Activated CD4-positive, alpha-beta T cell treated with anti-CD3 and anti-CD28 coated beads, Interleukin-2, amount 10 ng/mL, durations not matched to agents 24 days and 14 days (primary cell): ENCODE measurements at regions of chr3 and their contacts with region 1.

Region 1: DNA sequence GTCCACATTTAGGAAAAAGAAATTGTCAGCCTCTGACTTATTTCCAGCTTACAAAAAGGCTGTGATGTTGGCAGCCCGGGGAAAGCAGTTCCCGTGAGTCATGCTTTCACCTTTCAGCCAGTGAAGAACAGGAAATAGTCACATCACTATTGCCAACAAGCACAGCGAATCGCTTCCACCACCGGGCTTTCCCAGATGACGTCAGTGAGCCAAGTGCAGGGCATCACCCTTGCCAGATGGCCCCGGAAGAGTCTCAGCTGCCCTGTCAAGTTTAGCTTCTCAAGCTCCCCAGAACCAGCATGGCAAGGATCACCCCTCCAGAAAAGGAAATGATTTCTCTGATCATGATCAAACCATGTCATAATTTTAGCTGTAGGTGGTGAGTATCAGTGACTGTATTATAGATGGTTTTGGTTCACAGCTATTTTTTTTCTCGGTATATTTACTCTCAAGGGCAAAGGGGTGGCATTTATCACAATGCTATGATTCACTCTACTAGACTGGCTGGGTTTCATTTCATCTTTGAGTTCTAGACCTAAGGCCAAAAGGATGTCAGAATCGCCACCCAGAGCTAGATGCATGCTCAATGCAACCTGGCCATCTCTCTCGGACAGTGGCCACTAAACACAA is 32.9 kb downstream of the B3GNT5 start:
- DNase-seq: peak; percentile 96
- H3K4me3 Mint-ChIP-seq: peak overlapping the region; percentile 82
- H3K27ac Mint-ChIP-seq: peak overlapping the region; percentile 97
- H3K4me1 Mint-ChIP-seq: peaks cover 32% of the 10 kb centered on the region
- H3K27me3 Mint-ChIP-seq: no peaks in the 10 kb centered on the region

Region 2: GRCh38 chr3:183224180-183224970 is 61.6 kb before region 1 on chr3:
- intact Hi-C with region 1: loop called (anchors 1 kb)
- DNase-seq: peak; percentile 85
- H3K4me3 Mint-ChIP-seq: peak overlapping the region; percentile 74
- H3K27ac Mint-ChIP-seq: peak overlapping the region; percentile 73
- H3K4me1 Mint-ChIP-seq: peaks cover 32% of the 10 kb centered on the region
- H3K27me3 Mint-ChIP-seq: no peaks in the 10 kb centered on the region

Region 3: GRCh38 chr3:183265834-183266417 is 20.0 kb before region 1 on chr3:
- intact Hi-C with region 1: loop called (anchors 1 kb)
- DNase-seq: peak; percentile 65
- H3K4me3 Mint-ChIP-seq: no peak overlapping the region
- H3K27ac Mint-ChIP-seq: no peak overlapping the region
- H3K4me1 Mint-ChIP-seq: peaks cover 19% of the 10 kb centered on the region
- H3K27me3 Mint-ChIP-seq: no peaks in the 10 kb centered on the region

Region 4: DNA sequence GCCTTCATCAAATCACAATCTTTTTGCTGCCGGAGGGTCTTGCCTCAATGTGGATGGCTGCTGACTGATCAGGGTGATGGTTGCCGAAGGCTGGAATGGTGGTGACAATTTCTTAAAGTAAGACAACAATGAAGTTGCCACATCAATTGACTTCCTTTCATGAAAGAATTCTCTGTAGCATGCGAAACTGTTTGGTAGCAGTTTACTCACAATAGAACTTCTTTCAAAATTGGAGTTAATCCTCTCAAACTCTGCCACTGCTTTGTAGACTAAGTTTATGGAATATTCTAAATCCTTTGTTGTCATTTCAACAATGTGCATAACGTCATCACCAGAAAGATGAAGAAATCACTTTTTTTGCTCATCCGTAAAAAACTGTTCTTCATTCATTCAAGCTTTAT is 32.9 kb after region 1 on chr3:
- intact Hi-C with region 1: loop called (anchors 1 kb)
- DNase-seq: peak; percentile 66
- H3K4me3 Mint-ChIP-seq: peak overlapping the region; percentile 62
- H3K27ac Mint-ChIP-seq: peak overlapping the region; percentile 42
- H3K4me1 Mint-ChIP-seq: peaks cover 18% of the 10 kb centered on the region
- H3K27me3 Mint-ChIP-seq: no peaks in the 10 kb centered on the region

Region 5: DNA sequence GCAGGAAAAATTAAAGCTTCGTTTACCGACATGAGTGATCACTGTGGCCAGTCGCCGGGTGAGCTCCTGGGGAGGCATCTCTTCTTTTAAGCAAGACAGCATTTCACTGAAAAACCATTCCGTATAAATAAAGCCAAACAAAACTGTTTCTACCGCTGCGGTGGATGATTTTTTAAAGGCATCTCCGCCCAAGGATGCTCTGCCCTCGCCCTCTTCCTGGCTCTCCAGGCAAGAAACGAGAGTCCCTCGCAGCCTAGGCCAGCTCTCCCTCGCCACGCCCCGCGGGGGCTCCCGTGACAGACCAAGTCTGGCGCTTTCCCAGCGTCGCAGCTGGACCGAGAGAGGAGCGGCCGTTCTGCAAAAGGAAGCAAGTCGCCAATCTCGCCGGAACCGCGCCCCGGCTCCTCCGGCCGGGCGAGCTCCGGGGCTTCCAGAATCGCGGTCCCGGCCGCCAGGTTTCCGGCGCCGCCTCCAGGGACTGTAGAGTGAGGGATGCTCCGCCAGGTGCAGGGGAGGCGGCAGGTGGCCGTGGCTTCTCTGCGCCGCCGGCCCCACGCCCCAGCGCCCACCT is 142.0 kb after region 1 on chr3:
- intact Hi-C with region 1: loop called (anchors 1 kb)
- DNase-seq: peak; percentile 82
- H3K4me3 Mint-ChIP-seq: peak overlapping the region; percentile 82
- H3K27ac Mint-ChIP-seq: peak overlapping the region; percentile 57
- H3K4me1 Mint-ChIP-seq: peaks cover 35% of the 10 kb centered on the region
- H3K27me3 Mint-ChIP-seq: peaks cover 2% of the 10 kb centered on the region